ENCODE measurements at regions of chr9 and their contacts with region 1.

Region 1: GRCh38 chr9:2336055-2336454 is 285.5 kb upstream of the VLDLR start:
- DNase-seq: no peak
- H3K4me3 ChIP-seq: no peak overlapping the region
- H3K27ac ChIP-seq: no peak overlapping the region
- H3K4me1 ChIP-seq: peaks cover 29% of the 10 kb centered on the region
- H3K27me3 ChIP-seq: no peaks in the 10 kb centered on the region
- CTCF ChIP-seq: peak in 1 of 2 donors; percentile 42

Region 2: DNA sequence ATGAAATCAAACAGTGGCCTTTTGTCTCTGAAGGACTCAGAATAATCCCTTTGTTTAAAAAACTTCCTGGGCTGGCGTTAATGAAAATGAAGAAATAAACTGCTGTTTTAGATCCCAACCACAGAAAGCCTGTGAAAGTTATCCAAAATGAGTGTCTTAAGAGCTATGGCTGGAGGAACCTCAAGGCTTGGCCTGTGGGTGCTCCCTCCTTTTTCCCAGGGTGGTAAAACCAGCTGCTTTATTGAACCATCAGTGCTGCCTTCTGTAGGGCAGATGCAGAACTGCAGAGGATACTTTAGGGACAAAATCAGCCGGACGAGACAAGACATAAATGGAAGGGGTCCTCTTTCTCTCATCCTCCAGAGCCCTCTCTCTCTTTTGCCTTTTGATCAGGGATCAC is 220.0 kb before region 1 on chr9:
- CTCF ChIA-PET with region 1: no interaction called
- dilution Hi-C with region 1: no loop called
- in situ Hi-C with region 1: no loop called
- intact Hi-C with region 1: no loop called
- DNase-seq: peak; percentile 18
- H3K4me3 ChIP-seq: no peak overlapping the region
- H3K27ac ChIP-seq: no peak overlapping the region
- H3K4me1 ChIP-seq: peaks cover under 1% of the 10 kb centered on the region
- H3K27me3 ChIP-seq: no peaks in the 10 kb centered on the region
- CTCF ChIP-seq: peak; percentile 56 to 58

Region 3: DNA sequence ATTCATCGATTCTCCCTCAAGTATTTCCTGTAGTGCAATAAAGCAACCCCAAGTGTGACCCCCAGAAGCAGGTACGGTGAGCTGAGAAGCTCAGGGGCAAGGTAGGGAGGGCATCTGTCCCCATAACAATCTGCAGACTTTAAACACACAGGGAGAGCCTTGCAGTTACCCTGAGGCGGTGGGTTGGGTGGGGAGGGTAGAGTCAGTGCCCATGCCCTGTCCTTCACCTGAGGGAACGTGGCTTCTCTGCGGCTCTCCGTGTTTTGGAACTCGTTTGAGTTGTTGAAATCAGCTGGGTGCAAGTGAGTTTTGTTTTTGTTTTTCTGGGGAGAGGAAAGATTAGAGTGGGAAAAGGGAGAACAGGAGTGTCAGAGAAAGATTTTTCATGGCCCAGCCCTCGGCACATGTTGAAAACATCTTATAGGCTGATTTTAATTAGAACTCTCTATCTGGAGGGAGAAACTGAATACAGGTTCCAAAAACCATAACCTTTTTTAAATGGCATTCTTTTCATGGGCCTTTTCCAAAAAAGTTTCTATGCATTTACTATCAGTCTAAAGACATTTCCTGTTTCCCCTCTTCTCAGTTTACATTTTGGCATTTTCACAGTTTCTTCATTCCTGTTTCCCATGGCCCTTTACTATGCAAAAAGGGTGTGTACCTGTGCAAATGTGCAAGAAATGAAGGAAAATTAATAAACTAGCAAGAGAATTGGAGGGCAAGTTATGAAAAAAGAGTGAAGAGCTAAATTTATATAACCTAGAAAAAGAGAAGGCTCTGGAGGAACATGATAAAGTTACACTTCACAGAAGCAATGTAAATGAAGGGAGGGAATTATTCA is 19.0 kb after region 1 on chr9:
- CTCF ChIA-PET with region 1: no interaction called
- dilution Hi-C with region 1: no loop called
- in situ Hi-C with region 1: no loop called
- intact Hi-C with region 1: loop called (anchors 2 kb)
- DNase-seq: no peak
- H3K4me3 ChIP-seq: no peak overlapping the region
- H3K27ac ChIP-seq: no peak overlapping the region
- H3K4me1 ChIP-seq: no peaks in the 10 kb centered on the region
- H3K27me3 ChIP-seq: no peaks in the 10 kb centered on the region
- CTCF ChIP-seq: no peak

Region 4: DNA sequence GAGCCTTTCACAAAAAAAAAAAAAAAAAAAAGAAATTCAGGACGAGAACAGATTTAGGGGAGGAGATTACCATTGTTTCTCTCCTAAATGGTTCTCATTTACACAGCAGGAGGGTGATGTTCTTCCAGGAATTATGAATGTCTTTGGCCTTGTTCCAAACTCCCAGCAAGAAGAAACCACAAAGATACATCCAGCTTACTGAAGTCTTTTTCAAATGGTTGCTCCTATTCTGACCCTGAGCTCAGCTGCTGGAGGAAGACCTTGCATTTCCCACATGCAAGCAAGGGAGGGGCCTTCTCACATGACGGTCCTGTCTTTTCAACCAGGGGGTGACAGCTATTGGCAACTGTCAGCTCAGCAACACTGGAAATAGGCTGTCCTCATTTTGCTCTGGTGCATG is 82.6 kb after region 1 on chr9:
- CTCF ChIA-PET with region 1: no interaction called
- dilution Hi-C with region 1: no loop called
- in situ Hi-C with region 1: no loop called
- intact Hi-C with region 1: no loop called
- DNase-seq: peak; percentile 41
- H3K4me3 ChIP-seq: no peak overlapping the region
- H3K27ac ChIP-seq: no peak overlapping the region
- H3K4me1 ChIP-seq: no peaks in the 10 kb centered on the region
- H3K27me3 ChIP-seq: no peaks in the 10 kb centered on the region
- CTCF ChIP-seq: no peak

Region 5: DNA sequence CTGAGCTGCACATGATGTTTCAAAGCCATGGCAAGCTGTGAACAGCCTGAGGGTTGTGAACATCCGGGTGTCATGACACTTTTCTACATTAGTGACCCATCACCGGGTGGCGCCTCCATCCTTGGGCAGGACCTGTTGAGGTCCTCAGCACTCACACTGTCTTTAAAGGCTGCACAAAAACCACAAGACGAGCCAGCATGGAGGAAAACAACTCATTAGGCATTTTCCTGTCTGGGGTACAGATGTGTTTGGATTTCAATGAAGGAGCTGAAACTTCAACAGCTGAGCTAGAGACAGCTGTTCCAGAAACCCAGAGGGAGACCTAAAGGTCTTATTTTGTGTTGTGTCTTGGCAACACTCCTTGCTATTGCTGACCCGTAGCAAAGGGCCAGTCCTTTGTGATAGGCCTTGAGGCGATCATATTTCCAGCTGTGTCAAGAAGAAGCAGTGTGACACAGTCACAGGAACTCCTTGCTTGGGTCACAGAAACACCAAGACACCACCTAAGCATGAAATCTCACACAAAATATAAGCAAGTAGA is 133.7 kb after region 1 on chr9:
- CTCF ChIA-PET with region 1: no interaction called
- dilution Hi-C with region 1: no loop called
- in situ Hi-C with region 1: no loop called
- intact Hi-C with region 1: loop called (anchors 5 kb)
- DNase-seq: peak; percentile 40
- H3K4me3 ChIP-seq: no peak overlapping the region
- H3K27ac ChIP-seq: no peak overlapping the region
- H3K4me1 ChIP-seq: no peaks in the 10 kb centered on the region
- H3K27me3 ChIP-seq: peaks cover 4% of the 10 kb centered on the region
- CTCF ChIP-seq: peak in 1 of 2 donors; percentile 38

Region 6: GRCh38 chr9:2620919-2621679 is 285.0 kb after region 1 on chr9:
- CTCF ChIA-PET with region 1: no interaction called
- dilution Hi-C with region 1: no loop called
- in situ Hi-C with region 1: no loop called
- intact Hi-C with region 1: loop called (anchors 5 kb)
- DNase-seq: peak; percentile 76
- H3K4me3 ChIP-seq: peak overlapping the region; percentile 66 to 86 (median 80)
- H3K27ac ChIP-seq: no peak overlapping the region
- H3K4me1 ChIP-seq: peaks cover 18% of the 10 kb centered on the region
- H3K27me3 ChIP-seq: no peaks in the 10 kb centered on the region
- CTCF ChIP-seq: no peak

Measured in mammary epithelial cell (primary cell).